ENCODE measurements at regions of chr1 and their contacts with region 1.

Region 1: GRCh38 chr1:178122283-178122682 is 28.4 kb downstream of the RASAL2 start:
- DNase-seq: no peak
- ATAC-seq: peak; percentile 81
- H3K4me3 ChIP-seq: no peak overlapping the region
- H3K27ac ChIP-seq: no peak overlapping the region
- H3K4me1 ChIP-seq: no peaks in the 10 kb centered on the region
- H3K27me3 ChIP-seq: no peaks in the 10 kb centered on the region
- CTCF ChIP-seq: no peak
- EP300 ChIP-seq: peak in 1 of 2 experiments; percentile 74; a peak in 1 of 4 replicates
- POLR2A ChIP-seq: no peak
- RAD21 ChIP-seq: no peak

Region 2: DNA sequence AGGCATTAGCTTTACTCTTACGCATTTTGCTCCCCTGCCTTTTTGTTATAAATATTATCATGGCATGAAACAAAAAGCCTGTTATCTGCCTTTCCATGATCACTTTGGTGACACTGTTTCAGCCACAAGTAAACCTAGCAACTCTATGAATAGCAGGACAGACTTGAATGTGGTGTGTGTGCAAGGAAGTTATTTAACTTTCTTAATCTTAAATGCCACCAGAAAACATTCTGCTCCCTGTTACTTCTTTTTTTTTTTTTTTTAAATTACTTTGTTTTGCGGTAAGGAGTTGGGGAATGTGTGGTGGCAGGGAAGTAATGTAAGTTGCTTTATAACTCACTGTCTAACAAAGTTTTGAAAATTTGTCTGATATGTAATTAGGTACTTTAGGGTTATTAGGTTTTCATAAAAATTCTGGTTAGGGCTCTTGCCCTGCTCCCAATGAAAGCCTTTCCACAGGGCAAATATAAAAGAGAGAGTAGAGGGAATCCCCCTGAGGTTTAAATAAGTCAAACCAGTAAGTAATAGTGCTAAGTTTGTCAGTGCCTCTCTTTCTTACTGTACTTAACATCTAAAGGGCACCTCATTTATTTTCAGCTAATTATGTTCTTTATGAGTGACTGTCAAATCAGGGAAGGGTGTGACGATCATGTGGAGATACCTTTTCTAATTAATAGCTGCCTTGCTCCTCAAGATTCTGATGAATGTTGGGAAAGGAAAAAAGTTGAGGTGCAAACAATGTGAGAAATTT is 11.1 kb after region 1 on chr1:
- CTCF ChIA-PET with region 1: interaction called, 6 read pairs
- POLR2A ChIA-PET with region 1: interaction called, 8 read pairs
- RAD21 ChIA-PET with region 1: interaction called, 6 read pairs
- SMC1A ChIA-PET with region 1: interaction called, 15 read pairs
- in situ Hi-C with region 1: no loop called
- intact Hi-C with region 1: no loop called
- DNase-seq: no peak
- ATAC-seq: peak; percentile 70
- H3K4me3 ChIP-seq: no peak overlapping the region
- H3K27ac ChIP-seq: no peak overlapping the region
- H3K4me1 ChIP-seq: no peaks in the 10 kb centered on the region
- H3K27me3 ChIP-seq: no peaks in the 10 kb centered on the region
- CTCF ChIP-seq: no peak
- EP300 ChIP-seq: no peak
- POLR2A ChIP-seq: no peak
- RAD21 ChIP-seq: no peak